ENCODE measurements at regions of chr12 and their contacts with region 1.

Region 1: DNA sequence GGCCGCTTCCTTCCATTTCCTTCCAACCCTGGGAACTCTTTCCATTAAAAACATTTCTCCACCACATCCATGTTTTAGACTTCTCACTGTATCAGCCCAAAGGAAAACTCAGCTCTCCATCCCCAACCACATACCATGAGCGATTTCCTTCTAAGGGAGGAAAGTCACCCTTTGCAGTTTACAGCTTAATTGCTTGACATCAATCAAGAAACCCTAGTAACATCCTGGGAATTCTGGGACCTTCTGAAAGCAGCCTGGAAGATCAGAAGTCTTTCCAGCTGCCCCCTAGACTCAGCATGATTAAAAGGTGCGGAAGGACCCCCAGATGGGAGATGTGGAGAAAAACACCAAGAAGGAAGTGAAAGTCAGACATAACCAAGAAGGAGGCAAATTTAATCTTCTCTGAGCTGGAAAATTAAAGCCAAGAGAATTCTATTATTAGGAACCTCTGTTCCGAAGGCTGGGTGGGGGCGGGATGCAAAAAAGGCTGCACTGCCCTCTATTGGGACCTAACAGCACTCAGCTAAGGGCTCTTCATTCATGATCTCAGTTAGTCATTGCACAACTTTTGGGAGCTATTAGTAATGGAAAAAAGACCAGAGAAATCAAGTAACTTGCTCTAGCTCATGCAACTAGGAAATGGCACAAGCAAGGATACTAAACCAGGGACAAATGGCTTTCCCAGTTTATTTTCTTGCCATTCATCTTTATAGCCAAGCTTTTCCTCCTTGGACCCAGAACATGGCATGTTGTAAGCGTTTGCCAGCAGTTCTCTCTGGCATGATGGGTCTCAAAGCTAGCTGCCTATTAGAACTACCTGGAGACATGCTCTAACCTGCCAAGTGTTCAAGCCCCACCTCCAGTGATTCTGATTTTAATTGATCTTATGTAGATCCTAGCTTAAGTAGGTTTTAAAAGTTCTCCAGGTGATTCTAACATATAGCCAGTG is 73.1 kb upstream of the PLXNC1 start:
- DNase-seq: peak; percentile 72
- H3K4me3 ChIP-seq: no peak overlapping the region
- CTCF ChIP-seq: peak; percentile 64

Region 2: GRCh38 chr12:93751864-93752610 is 323.2 kb before region 1 on chr12:
- CTCF ChIA-PET with region 1: no interaction called
- POLR2A ChIA-PET with region 1: no interaction called
- DNase-seq: peak; percentile 95
- H3K4me3 ChIP-seq: no peak overlapping the region
- CTCF ChIP-seq: no peak

Region 3: GRCh38 chr12:93802698-93803423 is 272.4 kb before region 1 on chr12:
- CTCF ChIA-PET with region 1: interaction called, 10 read pairs
- POLR2A ChIA-PET with region 1: no interaction called
- DNase-seq: no peak
- H3K4me3 ChIP-seq: no peak overlapping the region
- CTCF ChIP-seq: peak; percentile 43

Region 4: GRCh38 chr12:94092516-94093241 is 17.4 kb after region 1 on chr12:
- CTCF ChIA-PET with region 1: interaction called, 23 read pairs
- POLR2A ChIA-PET with region 1: no interaction called
- DNase-seq: no peak
- H3K4me3 ChIP-seq: no peak overlapping the region
- CTCF ChIP-seq: no peak